OCI-LY7 (cell line): ENCODE measurements at regions of chr3 and their contacts with region 1.

Region 1: DNA sequence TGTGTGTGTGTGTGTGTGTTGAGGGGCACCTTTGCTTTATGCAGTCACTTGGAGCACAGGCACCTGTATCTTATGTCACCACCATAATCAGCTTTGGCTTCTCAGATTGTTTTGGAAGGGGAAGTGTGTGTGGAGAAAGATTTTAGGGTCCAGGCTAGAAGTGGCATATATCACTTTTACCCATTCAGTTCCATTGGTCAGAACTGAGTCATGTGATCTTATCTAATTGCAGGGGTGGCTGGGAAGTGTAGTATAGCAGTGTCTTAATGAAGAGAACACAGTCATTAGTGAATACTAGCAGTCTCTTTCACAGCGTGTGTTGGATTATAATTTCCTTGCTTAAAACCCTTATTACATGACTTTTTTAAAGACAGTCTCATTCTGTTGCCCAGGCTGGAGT is 20.6 kb downstream of the NCK1 start:
- DNase-seq: peak; percentile 67
- H3K4me3 ChIP-seq: peak overlapping the region; percentile 52
- H3K27ac ChIP-seq: peak overlapping the region; percentile 96
- H3K4me1 ChIP-seq: peaks cover 71% of the 10 kb centered on the region
- CTCF ChIP-seq: no peak

Region 2: DNA sequence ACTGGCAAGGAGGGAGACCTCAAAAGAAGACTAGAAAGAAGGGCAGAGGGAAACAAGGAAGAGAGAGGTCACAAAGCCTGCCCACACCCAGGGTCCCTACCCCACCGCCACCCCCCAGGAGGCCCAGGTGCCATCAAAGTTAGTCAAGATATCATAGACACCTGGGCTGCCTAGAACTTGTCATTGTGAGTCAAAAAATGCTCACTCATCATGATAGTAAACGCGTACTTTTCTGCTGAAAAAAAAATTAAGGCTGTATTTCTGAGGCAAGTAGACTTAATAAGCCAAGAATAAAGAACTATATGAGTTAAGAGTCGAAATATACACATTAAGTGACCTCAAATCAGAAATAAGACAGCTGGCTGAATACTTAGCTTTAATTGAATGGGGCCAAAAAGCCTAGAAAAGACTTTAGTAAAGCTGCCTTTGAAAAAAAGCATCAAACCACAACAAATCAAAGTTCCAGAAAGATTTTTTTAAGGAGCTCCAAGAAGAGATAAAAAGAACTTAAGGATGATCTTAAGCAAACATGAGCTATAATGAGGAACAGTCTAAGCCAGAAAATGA is 1332.6 kb before region 1 on chr3:
- CTCF ChIA-PET with region 1: no interaction called
- POLR2A ChIA-PET with region 1: no interaction called
- intact Hi-C with region 1: no loop called
- DNase-seq: no peak
- H3K4me3 ChIP-seq: no peak overlapping the region
- H3K27ac ChIP-seq: no peak overlapping the region
- H3K4me1 ChIP-seq: no peaks in the 10 kb centered on the region
- CTCF ChIP-seq: no peak

Region 3: DNA sequence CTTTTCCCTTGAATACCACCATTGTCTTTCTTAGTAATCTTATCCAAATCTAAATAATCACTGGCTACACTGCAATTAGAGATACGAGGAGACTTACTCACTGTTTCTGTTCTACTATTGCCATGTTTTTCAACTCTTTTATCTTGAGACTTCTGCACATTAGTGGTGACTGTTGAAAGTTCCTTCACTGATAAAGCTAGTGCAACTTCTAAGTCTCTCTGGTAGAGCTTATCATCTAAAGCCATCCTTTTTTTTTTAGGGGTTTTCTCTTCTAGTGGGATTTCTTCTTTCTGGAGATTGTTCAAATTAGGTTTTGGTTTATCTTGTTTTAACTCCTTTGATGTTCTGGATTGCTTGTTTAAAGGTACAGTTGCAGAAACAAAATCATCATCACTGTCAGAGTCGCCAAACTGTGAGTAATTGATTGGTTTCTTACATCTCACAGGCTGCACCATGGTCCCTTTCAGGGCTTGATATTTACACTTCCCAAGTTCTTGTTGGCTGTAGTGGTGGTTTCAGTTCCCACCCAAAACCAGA is 17.1 kb after region 1 on chr3:
- CTCF ChIA-PET with region 1: no interaction called
- POLR2A ChIA-PET with region 1: interaction called, 23 read pairs
- intact Hi-C with region 1: loop called (anchors 2 kb)
- DNase-seq: no peak
- H3K4me3 ChIP-seq: no peak overlapping the region
- H3K27ac ChIP-seq: peak overlapping the region; percentile 57
- H3K4me1 ChIP-seq: peaks cover 71% of the 10 kb centered on the region
- CTCF ChIP-seq: no peak